ENCODE measurements at regions of chr5 and their contacts with region 1.

Region 1: GRCh38 chr5:139392678-139393496 is 2.0 kb downstream of the PROB1 start:
- DNase-seq: peak; percentile 51 to 89 (median 64)
- ATAC-seq: peak; percentile 66
- H3K4me3 ChIP-seq: peak overlapping the region; percentile 81
- H3K4me3 Mint-ChIP-seq: peak overlapping the region; percentile 92
- H3K27ac ChIP-seq: no peak overlapping the region
- H3K27ac Mint-ChIP-seq: peak overlapping the region; percentile 59
- H3K4me1 ChIP-seq: peaks cover 61% of the 10 kb centered on the region
- H3K4me1 Mint-ChIP-seq: peaks cover 38% of the 10 kb centered on the region
- H3K27me3 ChIP-seq: peaks cover 0 to 6% of the 10 kb centered on the region in 2 experiments
- H3K27me3 Mint-ChIP-seq: no peaks in the 10 kb centered on the region
- CTCF ChIP-seq: peak; percentile 66

Region 2: DNA sequence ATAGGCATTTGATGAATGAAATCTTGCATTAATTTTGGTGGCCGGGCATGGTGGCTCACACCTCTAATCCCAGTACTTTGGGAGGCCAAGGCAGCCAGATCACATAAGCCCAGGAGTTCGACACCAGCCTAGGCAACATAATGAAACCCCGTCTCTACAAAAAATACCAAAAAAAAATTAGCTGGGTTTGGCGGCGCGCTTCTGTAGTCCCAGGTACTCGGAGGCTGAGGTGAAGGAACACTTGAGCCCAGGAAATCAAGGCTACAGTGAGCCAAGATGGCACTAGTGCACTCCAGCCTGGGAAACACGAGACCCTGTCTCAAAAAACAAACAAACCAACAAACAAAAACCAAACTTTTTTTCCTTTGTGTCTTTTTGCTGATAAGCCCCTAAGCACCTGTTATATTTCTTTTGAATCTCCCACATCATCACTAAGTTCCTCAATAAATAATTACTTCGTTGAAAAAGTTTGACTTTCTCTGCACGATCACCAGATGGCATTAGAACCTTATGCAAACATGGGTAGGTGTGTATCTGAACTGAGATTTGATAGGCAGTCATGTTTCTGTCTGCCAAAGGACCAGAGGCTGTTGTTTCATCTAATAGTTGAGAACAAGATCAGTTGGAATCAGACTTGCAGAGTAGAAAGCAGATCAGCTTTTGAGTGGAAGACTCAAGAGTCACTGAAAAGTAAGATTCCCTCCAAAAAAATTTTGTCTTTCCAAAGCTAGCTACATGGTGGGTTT is 104.8 kb before region 1 on chr5:
- CTCF ChIA-PET with region 1: no interaction called
- POLR2A ChIA-PET with region 1: interaction called, 4 read pairs
- intact Hi-C with region 1: loop called in 1 of 2 experiments (anchors 2 kb)
- DNase-seq: peak in 3 of 14 experiments; percentile 36 to 61 (median 49)
- ATAC-seq: peak; percentile 62
- H3K4me3 ChIP-seq: no peak overlapping the region
- H3K4me3 Mint-ChIP-seq: peak overlapping the region; percentile 12
- H3K27ac ChIP-seq: no peak overlapping the region
- H3K27ac Mint-ChIP-seq: peak overlapping the region; percentile 35
- H3K4me1 ChIP-seq: peaks cover 7% of the 10 kb centered on the region
- H3K4me1 Mint-ChIP-seq: peaks cover 4% of the 10 kb centered on the region
- H3K27me3 ChIP-seq: no peaks in the 10 kb centered on the region
- H3K27me3 Mint-ChIP-seq: no peaks in the 10 kb centered on the region
- CTCF ChIP-seq: peak; percentile 13